ENCODE measurements at regions of chr2 and their contacts with region 1.

Region 1: GRCh38 chr2:68715353-68716041 is 19.1 kb upstream of the ARHGAP25 start:
- H3K4me3 Mint-ChIP-seq: no peak overlapping the region
- H3K27ac Mint-ChIP-seq: peak overlapping the region; percentile 85
- H3K4me1 Mint-ChIP-seq: peaks cover 50% of the 10 kb centered on the region
- H3K27me3 Mint-ChIP-seq: no peaks in the 10 kb centered on the region

Region 2: DNA sequence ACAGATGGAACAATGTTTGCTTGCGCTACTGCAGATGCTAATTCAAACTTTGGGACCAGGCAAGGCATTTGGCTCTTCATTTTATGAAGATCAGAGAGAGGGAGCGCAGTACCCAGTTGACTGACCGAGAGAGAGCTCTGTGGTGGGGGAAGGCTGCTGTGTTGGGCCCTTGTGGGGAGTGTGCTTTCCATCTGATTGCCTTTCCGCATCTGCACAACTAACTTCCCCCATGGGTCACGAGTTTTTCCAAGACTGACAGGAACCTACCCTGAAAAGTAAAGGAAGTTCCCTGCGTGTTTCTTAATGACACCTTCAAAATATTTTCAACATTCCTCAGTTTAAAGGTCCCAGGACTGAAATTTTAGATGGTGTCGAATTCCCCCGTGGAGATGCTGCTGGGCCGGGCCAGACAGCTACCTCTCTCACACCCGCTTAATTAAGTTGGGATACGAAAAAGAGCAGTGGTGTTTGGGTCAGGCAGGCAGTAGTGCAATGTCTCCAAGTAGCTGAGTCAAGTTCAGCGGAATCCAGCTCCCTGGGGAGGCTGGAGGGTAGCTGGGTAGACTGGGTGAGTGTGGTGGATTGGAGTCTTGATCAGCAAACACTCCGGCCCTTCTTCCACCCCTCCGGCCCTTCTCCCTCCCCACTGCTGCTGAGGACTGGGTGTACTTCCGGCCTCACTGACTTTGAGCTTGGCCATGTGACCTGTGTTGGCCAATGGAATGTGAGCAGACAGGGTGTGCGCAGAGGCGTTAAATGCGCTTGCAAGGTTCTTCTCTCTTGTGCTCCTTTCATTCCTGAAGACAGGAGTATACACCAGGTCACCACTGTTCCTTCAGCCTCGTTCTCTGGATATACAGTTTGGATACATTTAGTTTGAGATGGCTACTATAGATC is 16.8 kb after region 1 on chr2:
- intact Hi-C with region 1: loop called (anchors 1 kb)
- H3K4me3 Mint-ChIP-seq: no peak overlapping the region
- H3K27ac Mint-ChIP-seq: no peak overlapping the region
- H3K4me1 Mint-ChIP-seq: peaks cover 15% of the 10 kb centered on the region
- H3K27me3 Mint-ChIP-seq: no peaks in the 10 kb centered on the region

Measured in dendritic cell treated with granulocyte-macrophage colony-stimulating factor and Interleukin-4, amounts not matched to agents 40 ng/mL and 50 ng/mL, for 4 days (primary cell).